ENCODE measurements at regions of chr4 and their contacts with region 1.

Region 1: GRCh38 chr4:164977243-164978164 is at the start of gene TRIM61:
- DNase-seq: peak; percentile 92
- H3K4me3 Mint-ChIP-seq: peak within 1 kb of the TSS; percentile 94
- H3K27ac Mint-ChIP-seq: peak within 1 kb of the TSS; percentile 85
- H3K4me1 Mint-ChIP-seq: peaks cover 15% of the 10 kb centered on the region
- H3K27me3 Mint-ChIP-seq: no peaks in the 10 kb centered on the region
- total RNA-seq, gene TRIM61: 3.4 and 3.7 TPM in 2 replicates

Region 2: DNA sequence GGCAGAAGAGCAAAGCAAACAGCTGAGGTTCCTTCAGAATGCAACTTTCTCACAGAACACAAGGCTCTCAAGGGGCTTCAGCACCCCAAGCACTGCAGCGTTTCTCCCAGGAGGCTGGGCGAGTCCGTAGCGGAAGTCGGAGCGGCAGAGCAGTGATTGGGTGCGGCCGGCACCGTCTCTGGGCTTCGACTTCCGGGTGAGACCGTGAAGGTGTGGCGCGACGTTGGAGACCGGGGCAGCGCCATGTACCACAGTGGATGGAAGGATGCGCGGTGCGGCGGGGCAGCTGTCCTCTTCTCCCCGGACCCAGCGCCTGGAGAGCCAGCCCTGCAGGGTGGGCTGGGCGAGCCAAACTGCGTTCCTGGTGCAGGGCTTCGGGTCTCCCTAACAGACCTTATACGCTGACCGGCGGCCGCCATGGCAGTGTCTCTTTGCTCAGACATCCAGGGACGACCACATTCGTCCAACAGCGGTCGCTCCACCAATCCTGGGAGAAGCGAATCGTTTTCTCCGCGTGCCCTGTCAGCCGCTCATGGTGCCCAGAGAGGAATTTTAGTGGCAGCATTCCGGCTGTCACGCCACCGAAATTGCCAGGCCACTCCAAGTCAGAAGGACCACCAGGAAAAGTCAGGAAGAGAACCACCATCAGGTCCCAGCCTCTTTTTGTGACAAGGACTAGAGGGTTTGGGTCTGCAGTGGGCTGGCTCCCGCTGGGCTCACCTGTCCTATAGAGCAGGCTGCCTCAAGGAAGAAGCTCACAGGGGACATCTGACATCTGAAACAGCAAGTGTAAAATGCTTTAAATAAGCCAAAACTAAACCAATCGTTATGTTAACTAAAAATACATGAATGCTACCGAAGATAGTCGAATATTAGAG is 20.5 kb before region 1 on chr4:
- intact Hi-C with region 1: loop called (anchors 2 kb)
- DNase-seq: peak; percentile 95
- H3K4me3 Mint-ChIP-seq: peak overlapping the region; percentile 94
- H3K27ac Mint-ChIP-seq: peak overlapping the region; percentile 77
- H3K4me1 Mint-ChIP-seq: peaks cover 14% of the 10 kb centered on the region
- H3K27me3 Mint-ChIP-seq: peaks cover 4% of the 10 kb centered on the region

Region 3: GRCh38 chr4:165009493-165010227 is 32.2 kb after region 1 on chr4:
- intact Hi-C with region 1: no loop called
- DNase-seq: peak; percentile 85
- H3K4me3 Mint-ChIP-seq: no peak overlapping the region
- H3K27ac Mint-ChIP-seq: peak overlapping the region; percentile 26
- H3K4me1 Mint-ChIP-seq: peaks cover 12% of the 10 kb centered on the region
- H3K27me3 Mint-ChIP-seq: peaks cover 37% of the 10 kb centered on the region

Region 4: GRCh38 chr4:165248102-165248501 is 270.6 kb after region 1 on chr4:
- intact Hi-C with region 1: no loop called
- DNase-seq: no peak
- H3K4me3 Mint-ChIP-seq: no peak overlapping the region
- H3K27ac Mint-ChIP-seq: no peak overlapping the region
- H3K4me1 Mint-ChIP-seq: peaks cover 17% of the 10 kb centered on the region
- H3K27me3 Mint-ChIP-seq: no peaks in the 10 kb centered on the region